Heart left ventricle (tissue), 16 donors: ENCODE measurements at regions of chr18 and their contacts with region 1.

Region 1: GRCh38 chr18:23918401-23919032 is 96.0 kb upstream of the TTC39C start:
- DNase-seq: peak; percentile 51 to 79 (median 68)
- ATAC-seq: peak in 3 of 4 donors; percentile 58 to 69 (median 62)
- H3K4me3 ChIP-seq: no peak overlapping the region
- H3K27ac ChIP-seq: no peak overlapping the region
- H3K4me1 ChIP-seq: no peaks in the 10 kb centered on the region
- H3K27me3 ChIP-seq: no peaks in the 10 kb centered on the region
- CTCF ChIP-seq: peak; percentile 70 to 95 (median 84)
- POLR2A ChIP-seq: no peak

Region 2: GRCh38 chr18:23619388-23619881 is 299.1 kb before region 1 on chr18:
- intact Hi-C with region 1: loop called in 7 of 10 experiments (anchors 5 to 10 kb)
- DNase-seq: peak in 4 of 5 donors; percentile 19 to 66 (median 36)
- ATAC-seq: peak; percentile 40 to 76 (median 69)
- H3K4me3 ChIP-seq: peak overlapping the region; percentile 16 to 66 (median 48)
- H3K27ac ChIP-seq: peak overlapping the region in 2 of 12 donors; percentile 36 to 39
- H3K4me1 ChIP-seq: peaks cover 0 to 15% (median 4%) of the 10 kb centered on the region in 12 donors
- H3K27me3 ChIP-seq: peaks cover 0 to 30% (median 0%) of the 10 kb centered on the region in 9 donors
- CTCF ChIP-seq: peak in 1 of 12 donors; percentile 26
- POLR2A ChIP-seq: no peak

Region 3: DNA sequence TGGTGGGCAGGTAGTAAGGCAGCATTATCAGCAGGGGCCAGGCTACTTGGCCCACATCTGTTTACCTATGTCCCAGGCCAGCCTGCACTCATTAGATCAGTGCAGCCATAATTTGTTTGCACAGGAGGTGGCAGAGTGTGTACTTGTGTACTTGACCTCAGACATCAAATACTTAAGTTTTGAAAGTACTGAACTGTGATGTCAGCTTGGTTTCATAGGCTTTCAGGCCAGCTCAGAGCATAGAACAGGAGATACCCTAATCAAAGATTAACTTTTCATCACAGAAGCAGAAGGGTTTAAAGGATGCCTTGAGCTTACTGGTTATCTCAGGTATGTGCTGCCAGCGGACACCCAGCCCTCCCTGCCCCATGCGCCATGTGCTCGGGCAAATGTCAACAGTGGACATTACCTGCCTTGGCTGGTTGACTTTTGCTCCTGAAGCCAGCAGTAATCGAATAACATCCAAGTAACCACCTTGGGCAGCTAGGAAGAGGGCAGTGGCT is 289.0 kb before region 1 on chr18:
- intact Hi-C with region 1: loop called in 6 of 10 experiments (anchors 5 to 10 kb)
- DNase-seq: no peak
- ATAC-seq: no peak
- H3K4me3 ChIP-seq: no peak overlapping the region
- H3K27ac ChIP-seq: no peak overlapping the region
- H3K4me1 ChIP-seq: peaks cover 0 to 11% (median 0%) of the 10 kb centered on the region in 12 donors
- H3K27me3 ChIP-seq: no peaks in the 10 kb centered on the region
- CTCF ChIP-seq: no peak
- POLR2A ChIP-seq: no peak

Region 4: DNA sequence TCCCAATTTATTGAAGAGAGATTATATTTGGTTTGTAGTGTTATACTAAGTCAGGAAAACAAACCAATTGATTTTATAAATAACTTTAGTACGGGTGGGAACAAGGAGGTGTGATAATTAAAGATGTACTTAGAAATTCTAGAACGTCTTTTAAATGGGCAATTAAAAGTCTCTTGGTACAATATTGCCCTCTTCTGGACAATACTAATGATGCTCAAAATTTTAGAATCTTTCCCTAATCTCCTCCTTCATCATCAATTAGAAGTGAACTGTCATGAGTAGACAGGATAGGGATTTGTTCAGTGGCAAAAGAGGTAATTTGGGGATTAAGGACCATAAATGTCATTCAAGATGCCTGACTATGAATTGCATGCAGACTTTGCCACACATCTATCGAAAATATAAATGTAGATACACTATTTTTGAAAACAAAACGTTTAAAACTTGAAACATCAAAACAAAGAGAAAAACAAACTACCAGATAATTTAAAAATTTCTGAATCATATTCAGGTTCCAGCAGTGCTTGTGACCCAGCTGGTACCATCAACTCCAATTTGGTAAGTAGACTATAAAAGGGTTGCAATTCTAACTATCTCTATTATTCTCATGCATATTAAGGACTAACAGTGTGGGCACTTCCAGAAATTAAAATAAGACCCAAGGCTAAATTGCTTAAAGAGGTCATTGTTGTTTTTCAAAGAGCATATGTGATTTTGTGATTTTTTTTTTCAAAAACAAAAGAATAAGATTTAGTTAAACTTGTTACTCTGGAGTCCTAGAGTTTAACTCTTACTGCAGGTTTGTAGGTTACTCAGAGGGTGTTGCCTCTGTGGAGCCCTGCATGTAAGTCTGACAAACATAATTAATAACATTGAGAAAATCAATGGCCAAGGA is 105.7 kb before region 1 on chr18:
- intact Hi-C with region 1: loop called in 3 of 10 experiments (anchors 5 to 10 kb)
- DNase-seq: no peak
- ATAC-seq: no peak
- H3K4me3 ChIP-seq: no peak overlapping the region
- H3K27ac ChIP-seq: no peak overlapping the region
- H3K4me1 ChIP-seq: peaks cover 0 to 9% (median 0%) of the 10 kb centered on the region in 12 donors
- H3K27me3 ChIP-seq: no peaks in the 10 kb centered on the region
- CTCF ChIP-seq: peak; percentile 45 to 74 (median 59)
- POLR2A ChIP-seq: no peak

Region 5: DNA sequence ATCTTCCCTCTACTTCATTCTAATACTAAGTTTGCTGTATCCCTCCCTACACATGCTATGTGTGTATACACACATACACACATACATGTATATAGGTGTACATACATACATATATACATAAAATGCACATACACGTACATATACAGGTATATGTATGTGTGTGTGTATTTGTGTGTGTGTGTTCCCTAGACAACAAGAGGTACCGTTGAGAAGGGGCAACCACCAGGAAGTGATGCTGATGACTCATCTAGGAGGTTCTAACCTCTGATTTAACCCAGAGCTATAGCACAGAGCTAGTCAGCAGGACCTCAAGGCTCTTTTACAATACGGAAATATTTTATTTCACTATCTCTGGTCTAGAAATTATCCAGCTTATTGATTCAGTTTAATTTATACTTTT is 90.1 kb before region 1 on chr18:
- intact Hi-C with region 1: loop called in 6 of 10 experiments (anchors 2 to 10 kb)
- DNase-seq: no peak
- ATAC-seq: no peak
- H3K4me3 ChIP-seq: no peak overlapping the region
- H3K27ac ChIP-seq: no peak overlapping the region
- H3K4me1 ChIP-seq: peaks cover 0 to 35% (median 16%) of the 10 kb centered on the region in 12 donors
- H3K27me3 ChIP-seq: no peaks in the 10 kb centered on the region
- CTCF ChIP-seq: no peak
- POLR2A ChIP-seq: no peak

Region 6: DNA sequence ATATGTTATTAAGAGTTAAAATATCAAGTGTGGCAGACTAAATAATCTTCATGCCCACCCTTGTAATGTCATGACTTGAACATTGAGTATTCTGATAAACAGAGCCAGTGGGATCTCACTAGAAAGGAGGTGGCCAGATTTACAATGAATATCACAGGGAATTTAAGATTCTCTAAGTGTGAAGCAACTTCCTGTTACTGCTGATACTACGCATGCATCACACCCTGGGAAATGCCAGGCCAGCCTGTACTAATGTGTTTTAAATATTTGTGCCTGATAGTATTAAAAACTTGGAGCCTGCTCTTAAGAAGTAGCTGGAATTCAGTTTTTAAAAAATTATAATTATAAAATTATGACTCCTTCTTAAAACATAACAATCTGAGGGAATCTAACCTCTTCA is 80.9 kb before region 1 on chr18:
- intact Hi-C with region 1: loop called in 2 of 10 experiments (anchors 5 kb)
- DNase-seq: no peak
- ATAC-seq: peak in 3 of 4 donors; percentile 79 to 83 (median 81)
- H3K4me3 ChIP-seq: no peak overlapping the region
- H3K27ac ChIP-seq: peak overlapping the region in 8 of 12 donors; percentile 27 to 59 (median 35)
- H3K4me1 ChIP-seq: peaks cover 0 to 19% (median 9%) of the 10 kb centered on the region in 12 donors
- H3K27me3 ChIP-seq: no peaks in the 10 kb centered on the region
- CTCF ChIP-seq: no peak
- POLR2A ChIP-seq: no peak

Region 7: DNA sequence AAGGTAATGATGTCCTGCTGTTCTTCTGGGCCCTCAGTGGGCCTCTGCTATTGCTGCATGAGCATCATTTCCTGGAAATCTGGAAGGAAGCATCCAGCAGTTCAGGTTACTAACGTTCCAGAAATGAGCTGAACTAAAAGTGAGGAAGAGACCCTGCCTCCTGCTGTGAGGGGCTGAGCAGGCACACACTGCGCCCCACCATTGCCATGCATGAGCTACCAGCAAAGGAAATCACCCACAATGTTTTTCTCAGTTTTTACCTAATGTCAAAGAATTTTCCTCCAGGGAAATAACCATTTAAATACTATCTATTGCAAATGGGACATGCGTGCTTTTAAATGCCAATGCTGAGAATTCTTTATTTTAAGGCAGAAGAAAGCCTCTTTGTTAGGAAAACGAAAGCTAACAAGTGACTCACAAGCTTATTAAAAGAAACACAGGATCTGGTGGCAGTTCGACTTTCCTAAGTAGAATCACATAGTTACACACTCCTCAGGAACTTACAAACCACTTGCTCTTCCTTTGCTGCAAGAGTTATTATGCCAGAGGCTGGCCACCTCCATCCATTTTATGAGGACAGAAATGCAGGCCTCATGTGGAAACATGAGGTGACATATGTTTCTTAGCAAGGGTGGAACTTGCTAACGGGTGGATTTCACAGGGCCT is 56.6 kb before region 1 on chr18:
- intact Hi-C with region 1: loop called in 1 of 10 experiments (anchors 10 kb)
- DNase-seq: no peak
- ATAC-seq: peak in 2 of 4 donors; percentile 31 to 43
- H3K4me3 ChIP-seq: no peak overlapping the region
- H3K27ac ChIP-seq: peak overlapping the region in 7 of 12 donors; percentile 1 to 54 (median 34)
- H3K4me1 ChIP-seq: peaks cover 0 to 20% (median 0%) of the 10 kb centered on the region in 12 donors
- H3K27me3 ChIP-seq: no peaks in the 10 kb centered on the region
- CTCF ChIP-seq: no peak
- POLR2A ChIP-seq: no peak